ENCODE measurements at regions of chr1 and their contacts with region 1.

Region 1: GRCh38 chr1:54121482-54122134 is 31.2 kb downstream of the CDCP2 start:
- DNase-seq: peak; percentile 77 to 89
- ATAC-seq: peak; percentile 71 to 85 (median 76)
- H3K4me3 ChIP-seq: peak overlapping the region; percentile 57
- H3K27ac ChIP-seq: no peak overlapping the region
- H3K4me1 ChIP-seq: peaks cover 9% of the 10 kb centered on the region
- H3K27me3 ChIP-seq: no peaks in the 10 kb centered on the region
- CTCF ChIP-seq: peak; percentile 76

Region 2: GRCh38 chr1:54199765-54200518 is 78.3 kb after region 1 on chr1 and contains the starts of genes CYB5RL and MRPL37:
- intact Hi-C with region 1: loop called (anchors 5 to 10 kb)
- DNase-seq: peak; percentile 88 to 93
- ATAC-seq: peak; percentile 96 to 100 (median 99)
- H3K4me3 ChIP-seq: peak within 1 kb of the TSS; percentile 79
- H3K27ac ChIP-seq: peak within 1 kb of the TSS; percentile 80
- H3K4me1 ChIP-seq: peaks cover 20% of the 10 kb centered on the region
- H3K27me3 ChIP-seq: no peaks in the 10 kb centered on the region
- CTCF ChIP-seq: no peak
- total RNA-seq, gene CYB5RL: 2.8 to 6.4 (median 3.3) TPM
- total RNA-seq, gene MRPL37: 89.6 to 109 (median 102) TPM

Region 3: GRCh38 chr1:54220004-54220811 is 98.6 kb after region 1 on chr1:
- intact Hi-C with region 1: loop called in 1 of 2 experiments (anchors 5 kb)
- DNase-seq: peak; percentile 79 to 85
- ATAC-seq: peak; percentile 82 to 89 (median 86)
- H3K4me3 ChIP-seq: no peak overlapping the region
- H3K27ac ChIP-seq: peak overlapping the region; percentile 67
- H3K4me1 ChIP-seq: peaks cover 20% of the 10 kb centered on the region
- H3K27me3 ChIP-seq: no peaks in the 10 kb centered on the region
- CTCF ChIP-seq: no peak

Region 4: DNA sequence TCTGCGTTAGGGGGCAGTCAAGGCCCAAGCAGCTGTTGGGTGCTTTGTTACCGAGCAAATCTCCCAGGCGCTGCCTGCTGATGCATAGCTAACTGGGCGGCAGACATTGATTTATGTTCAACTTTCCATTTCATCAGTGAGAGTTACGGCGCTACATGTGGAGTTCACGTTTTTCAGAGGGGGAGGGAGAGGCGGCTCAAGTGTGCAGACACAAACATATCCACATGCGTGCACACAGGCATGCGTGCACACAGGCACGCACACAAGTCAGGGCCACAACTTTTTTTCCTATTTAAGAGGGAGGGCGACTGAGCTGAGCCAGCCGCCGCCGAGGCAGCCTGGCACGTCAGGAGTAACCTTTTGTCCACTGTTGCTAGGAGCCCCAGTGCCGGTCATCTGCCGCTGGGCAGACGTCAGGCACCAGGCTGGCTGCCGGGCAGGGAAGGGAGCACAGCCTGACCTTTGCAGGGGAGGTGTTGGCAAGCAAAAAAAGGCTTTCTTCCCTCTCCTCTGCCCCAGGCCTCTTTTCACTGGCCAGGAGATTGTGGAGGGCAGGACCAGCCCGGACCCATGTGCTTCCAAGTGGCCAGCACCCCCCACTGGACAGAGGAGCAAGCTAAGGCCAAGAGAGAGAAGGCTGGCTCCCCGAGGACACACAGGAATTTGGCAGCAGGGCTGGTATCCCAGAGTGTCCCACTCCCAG is 151.6 kb after region 1 on chr1:
- intact Hi-C with region 1: loop called in 1 of 2 experiments (anchors 5 kb)
- DNase-seq: peak; percentile 78 to 91
- ATAC-seq: peak; percentile 87 to 89 (median 88)
- H3K4me3 ChIP-seq: peak overlapping the region; percentile 56
- H3K27ac ChIP-seq: peak overlapping the region; percentile 87
- H3K4me1 ChIP-seq: peaks cover 84% of the 10 kb centered on the region
- H3K27me3 ChIP-seq: no peaks in the 10 kb centered on the region
- CTCF ChIP-seq: peak; percentile 57

Region 5: DNA sequence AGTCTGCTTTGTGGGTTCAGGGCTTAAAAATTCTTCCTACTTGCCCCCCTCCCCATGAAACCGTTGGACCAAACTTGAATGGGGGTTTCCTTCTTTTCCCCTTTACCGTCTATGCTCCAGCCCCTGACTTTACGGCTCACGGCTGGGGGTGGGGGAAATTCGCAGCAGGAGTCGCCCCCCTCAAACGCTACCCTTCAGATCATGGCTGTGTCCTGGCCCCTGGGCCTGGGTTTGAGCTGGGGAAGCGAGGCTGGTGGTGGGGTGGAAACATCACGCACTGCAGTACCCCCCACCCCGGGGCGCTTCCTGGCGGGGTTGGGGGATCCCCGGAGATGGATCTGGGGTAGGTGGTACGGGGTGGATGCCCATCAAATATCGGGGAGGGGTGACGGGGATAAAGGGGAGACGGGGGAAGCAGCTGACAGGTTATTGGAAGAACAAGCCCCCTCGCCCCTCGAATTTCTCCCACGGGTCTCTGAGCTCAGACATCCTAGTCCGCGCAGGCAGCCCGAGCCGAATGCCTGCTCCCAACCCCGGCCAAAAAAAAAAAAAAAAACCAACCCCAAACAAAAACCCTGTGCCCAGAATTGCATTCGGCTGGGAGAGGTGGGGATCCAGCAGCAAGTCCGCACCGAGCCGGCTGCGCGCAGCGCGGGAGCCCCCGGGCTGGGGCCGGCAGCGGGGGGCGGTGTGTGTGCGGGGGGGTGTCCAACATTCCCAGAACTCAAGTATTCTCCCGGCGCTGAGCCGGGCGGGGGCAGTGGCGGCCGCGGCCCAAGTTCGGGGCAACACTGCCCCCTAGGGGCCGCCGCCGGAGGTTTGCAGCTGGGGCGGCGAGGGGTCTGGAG is 367.4 kb after region 1 on chr1:
- intact Hi-C with region 1: loop called (anchors 1 to 2 kb)
- DNase-seq: peak; percentile 78 to 89
- ATAC-seq: peak; percentile 79 to 83 (median 82)
- H3K4me3 ChIP-seq: peak overlapping the region; percentile 81
- H3K27ac ChIP-seq: peak overlapping the region; percentile 87
- H3K4me1 ChIP-seq: peaks cover 27% of the 10 kb centered on the region
- H3K27me3 ChIP-seq: no peaks in the 10 kb centered on the region
- CTCF ChIP-seq: peak; percentile 96

Region 6: DNA sequence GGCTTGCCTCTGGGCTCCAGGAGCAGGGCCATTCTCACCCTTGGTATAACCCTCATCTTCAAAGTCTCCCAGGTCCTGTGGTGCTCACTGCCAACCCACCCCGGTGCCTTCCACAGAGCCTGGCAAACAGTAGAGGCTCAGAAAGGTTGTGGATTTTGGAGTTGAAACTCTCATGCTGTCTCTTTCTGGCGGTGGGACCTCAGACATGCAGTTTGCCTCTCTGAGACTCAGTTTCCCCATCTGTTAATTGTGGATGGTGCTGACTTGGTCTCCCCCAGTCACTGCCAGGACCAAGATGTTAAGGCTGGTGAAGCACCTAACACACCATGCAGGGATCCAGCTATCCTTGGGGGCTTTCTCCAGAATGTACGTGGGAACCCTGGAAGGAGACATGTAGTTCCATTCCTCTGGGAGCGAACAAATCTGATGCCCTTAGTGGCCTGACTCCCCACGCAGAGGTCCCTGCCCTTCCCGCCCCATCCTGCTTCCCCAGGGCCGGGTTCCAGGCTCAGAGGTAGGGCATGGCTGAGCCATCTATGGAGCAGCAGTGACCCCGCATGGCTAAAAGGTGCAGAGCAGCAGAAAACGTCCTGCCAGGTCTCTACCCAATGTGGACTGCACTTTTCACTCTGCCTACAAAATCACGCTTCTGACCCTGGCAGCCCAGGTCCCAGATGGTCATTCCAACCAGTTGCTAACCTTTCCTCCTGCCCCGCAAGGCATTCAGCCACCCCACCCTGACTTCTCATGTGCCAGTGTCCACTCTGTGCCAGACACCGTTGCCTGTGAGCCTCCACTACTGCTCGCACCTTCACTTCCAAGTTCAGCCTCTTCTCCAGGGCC is 688.7 kb after region 1 on chr1:
- intact Hi-C with region 1: loop called (anchors 5 to 10 kb)
- DNase-seq: peak; percentile 44 to 71
- ATAC-seq: peak; percentile 85 to 95 (median 88)
- H3K4me3 ChIP-seq: no peak overlapping the region
- H3K27ac ChIP-seq: no peak overlapping the region
- H3K4me1 ChIP-seq: no peaks in the 10 kb centered on the region
- H3K27me3 ChIP-seq: no peaks in the 10 kb centered on the region
- CTCF ChIP-seq: peak; percentile 80

Measured in psoas muscle (tissue), 8 donors.